Mammary epithelial cell (primary cell): ENCODE measurements at regions of chr20 and their contacts with region 1.

Region 1: DNA sequence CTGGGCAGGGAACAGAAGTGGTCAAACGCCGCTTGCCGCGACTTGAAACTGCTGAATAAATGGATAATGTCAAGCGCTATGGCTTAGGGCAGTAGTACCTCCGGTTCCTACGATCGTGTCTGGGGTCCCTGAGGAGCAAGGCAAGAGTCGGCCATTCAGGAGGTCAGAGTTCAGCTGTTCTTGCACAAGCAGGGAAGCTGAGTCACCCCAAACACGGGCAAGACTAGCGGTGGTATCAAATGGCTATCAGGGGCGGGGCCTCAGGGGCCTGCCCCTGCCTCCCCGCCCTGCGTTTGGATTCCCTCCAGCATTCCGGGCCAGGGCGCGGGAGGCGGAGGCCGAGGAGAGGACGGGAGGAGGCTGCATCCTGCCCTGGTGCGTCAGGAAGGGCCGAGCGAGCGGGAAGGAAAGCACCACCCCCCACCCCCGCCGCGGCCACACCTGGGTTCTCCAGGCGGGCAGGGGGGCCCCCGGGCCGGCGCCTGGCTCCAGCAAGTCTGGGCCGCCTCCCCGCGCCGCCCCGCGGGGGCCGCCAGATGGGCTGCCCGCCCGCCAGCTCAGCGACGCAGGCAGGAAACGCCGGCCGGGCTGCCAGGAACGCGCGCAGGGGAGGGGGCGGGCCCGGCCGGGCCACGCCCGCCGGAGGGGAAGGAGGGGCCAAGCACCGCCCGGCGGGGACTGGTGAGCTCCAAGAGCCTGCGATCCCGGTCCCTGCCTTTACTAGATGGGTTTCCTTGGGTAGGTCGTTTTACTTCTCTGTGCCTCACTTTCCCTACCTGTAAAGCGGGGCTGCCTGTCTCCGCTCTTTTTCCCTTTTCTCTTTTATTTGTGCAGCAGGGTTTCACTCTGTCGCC is 32.2 kb upstream of the ID1 start:
- DNase-seq: peak; percentile 99
- H3K4me3 ChIP-seq: peak overlapping the region; percentile 43 to 51 (median 45)
- H3K27ac ChIP-seq: peak overlapping the region; percentile 84
- H3K4me1 ChIP-seq: peaks cover 45% of the 10 kb centered on the region
- H3K27me3 ChIP-seq: no peaks in the 10 kb centered on the region
- CTCF ChIP-seq: no peak

Region 2: GRCh38 chr20:31494131-31494530 is 78.8 kb before region 1 on chr20:
- CTCF ChIA-PET with region 1: no interaction called
- dilution Hi-C with region 1: no loop called
- in situ Hi-C with region 1: no loop called
- intact Hi-C with region 1: no loop called
- DNase-seq: peak; percentile 49
- H3K4me3 ChIP-seq: no peak overlapping the region
- H3K27ac ChIP-seq: no peak overlapping the region
- H3K4me1 ChIP-seq: peaks cover 4% of the 10 kb centered on the region
- H3K27me3 ChIP-seq: no peaks in the 10 kb centered on the region
- CTCF ChIP-seq: peak; percentile 47 to 56

Region 3: DNA sequence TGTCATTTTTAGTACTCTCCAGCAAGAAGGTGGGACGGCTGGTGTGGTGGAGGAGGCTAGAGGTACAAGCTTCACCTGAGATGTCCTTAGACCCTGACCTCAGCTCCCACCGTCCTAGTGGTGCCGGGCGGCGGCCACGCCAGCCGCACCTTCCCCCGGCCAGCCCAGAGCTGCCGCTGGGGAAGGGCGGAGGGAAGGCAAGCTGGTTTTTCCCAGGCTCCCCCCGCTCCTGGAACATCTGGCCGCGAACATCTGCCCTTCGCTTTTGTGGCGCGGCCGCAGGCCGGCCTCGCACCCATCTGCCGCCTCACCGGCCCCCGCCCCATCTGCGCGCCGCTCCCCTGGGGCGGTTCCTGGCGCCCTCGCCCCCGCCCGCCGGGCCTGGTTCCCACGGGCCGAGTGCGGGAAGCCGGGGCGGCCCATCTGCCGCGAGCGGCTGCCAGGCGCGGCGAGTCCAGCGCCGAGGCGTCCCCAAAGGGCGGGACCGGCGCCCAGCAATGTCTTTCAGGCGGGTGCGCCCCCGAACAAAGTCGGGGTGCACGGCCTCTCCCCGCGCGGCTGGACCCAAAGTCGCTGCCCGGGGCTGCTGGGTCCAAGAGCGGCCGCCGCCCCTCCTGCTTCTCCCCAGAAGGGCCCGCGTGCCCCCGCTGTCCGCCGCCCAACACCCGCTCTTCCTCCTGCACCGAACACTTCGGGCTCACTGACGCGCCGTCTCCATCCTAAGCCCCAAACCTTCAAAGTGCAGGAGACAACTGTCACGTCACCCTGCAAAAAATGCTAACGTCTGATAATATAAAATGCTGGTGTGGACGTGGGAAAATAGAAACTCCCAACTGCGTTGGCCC is 14.8 kb after region 1 on chr20:
- CTCF ChIA-PET with region 1: no interaction called
- dilution Hi-C with region 1: no loop called
- in situ Hi-C with region 1: no loop called
- intact Hi-C with region 1: loop called (anchors 1 kb)
- DNase-seq: peak; percentile 16
- H3K4me3 ChIP-seq: peak overlapping the region in 2 of 3 experiments; percentile 29 to 38
- H3K27ac ChIP-seq: no peak overlapping the region
- H3K4me1 ChIP-seq: peaks cover 22% of the 10 kb centered on the region
- H3K27me3 ChIP-seq: no peaks in the 10 kb centered on the region
- CTCF ChIP-seq: no peak

Region 4: GRCh38 chr20:31593225-31594002 is 20.5 kb after region 1 on chr20:
- CTCF ChIA-PET with region 1: interaction called, 9 read pairs
- dilution Hi-C with region 1: no loop called
- in situ Hi-C with region 1: no loop called
- intact Hi-C with region 1: loop called (anchors 1 kb)
- DNase-seq: peak; percentile 100
- H3K4me3 ChIP-seq: no peak overlapping the region
- H3K27ac ChIP-seq: peak overlapping the region; percentile 55
- H3K4me1 ChIP-seq: peaks cover 37% of the 10 kb centered on the region
- H3K27me3 ChIP-seq: no peaks in the 10 kb centered on the region
- CTCF ChIP-seq: peak in 1 of 2 donors; percentile 18

Region 5: GRCh38 chr20:32116079-32116521 is 543.2 kb after region 1 on chr20:
- CTCF ChIA-PET with region 1: no interaction called
- dilution Hi-C with region 1: no loop called
- in situ Hi-C with region 1: no loop called
- intact Hi-C with region 1: no loop called
- DNase-seq: no peak
- H3K4me3 ChIP-seq: no peak overlapping the region
- H3K27ac ChIP-seq: no peak overlapping the region
- H3K4me1 ChIP-seq: peaks cover under 1% of the 10 kb centered on the region
- H3K27me3 ChIP-seq: no peaks in the 10 kb centered on the region
- CTCF ChIP-seq: no peak